Activated CD4-positive, alpha-beta memory T cell treated with anti-CD3 and anti-CD28 coated beads, Interleukin-2, amount 10 ng/mL, durations not matched to agents 7 days and 5 days (primary cell): ENCODE measurements at regions of chr4 and their contacts with region 1.

Region 1: DNA sequence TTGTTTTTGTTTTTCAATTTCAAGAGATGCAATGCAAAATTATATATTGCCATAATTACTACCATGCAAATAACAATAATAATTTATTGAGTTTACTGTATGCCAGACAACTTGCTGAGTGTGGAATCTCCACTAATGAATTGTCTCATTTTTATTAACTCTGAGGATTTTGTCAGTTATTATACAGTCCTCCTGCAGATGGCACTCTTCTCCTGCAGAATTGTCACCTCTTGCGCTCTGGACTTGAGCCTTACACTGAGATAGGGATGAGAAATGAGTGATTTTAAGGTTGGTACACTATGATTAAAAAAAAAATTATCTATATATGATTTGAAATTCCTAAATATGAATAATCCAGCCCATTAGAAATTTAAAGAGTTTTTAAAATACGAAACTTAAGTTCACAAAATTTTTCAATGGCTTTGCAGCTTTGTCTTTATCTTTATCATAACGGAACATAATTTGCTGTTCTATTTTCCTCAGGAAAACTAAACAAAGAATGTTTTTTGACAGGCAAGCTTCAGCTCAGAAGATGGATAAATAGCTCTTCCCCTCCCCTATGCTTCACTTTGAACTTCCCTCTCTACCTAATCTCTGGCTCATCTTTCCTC is 12.7 kb upstream of the PAQR3 start:
- DNase-seq: peak; percentile 31
- H3K4me3 Mint-ChIP-seq: no peak overlapping the region
- H3K27ac Mint-ChIP-seq: no peak overlapping the region
- H3K4me1 Mint-ChIP-seq: peaks cover 5% of the 10 kb centered on the region
- H3K27me3 Mint-ChIP-seq: peaks cover 34% of the 10 kb centered on the region

Region 2: GRCh38 chr4:78938868-78939666 is 12.9 kb before region 1 on chr4 and contains the start of gene PAQR3:
- CTCF ChIA-PET with region 1: interaction called, 16 read pairs
- POLR2A ChIA-PET with region 1: no interaction called
- DNase-seq: peak; percentile 85
- H3K4me3 Mint-ChIP-seq: peak within 1 kb of the TSS; percentile 86
- H3K27ac Mint-ChIP-seq: peak within 1 kb of the TSS; percentile 59
- H3K4me1 Mint-ChIP-seq: peaks cover 35% of the 10 kb centered on the region
- H3K27me3 Mint-ChIP-seq: peaks cover 14% of the 10 kb centered on the region
- total RNA-seq, gene PAQR3: 12.4 to 12.7 TPM